ENCODE measurements at regions of chr17 and their contacts with region 1.

Region 1: GRCh38 chr17:14300575-14301278 is at the start of gene HS3ST3B1:
- DNase-seq: peak; percentile 100
- ATAC-seq: peak; percentile 84
- H3K4me3 ChIP-seq: peak within 1 kb of the TSS; percentile 95
- H3K27ac ChIP-seq: peak within 1 kb of the TSS; percentile 92
- H3K4me1 ChIP-seq: peaks cover 4% of the 10 kb centered on the region; the same call in 1 of the 2 replicates
- H3K27me3 ChIP-seq: peaks cover 3% of the 10 kb centered on the region; the same call in 1 of the 2 replicates
- CTCF ChIP-seq: no peak
- POLR2A ChIP-seq: peak; percentile 92
- RAD21 ChIP-seq: peak; percentile 41
- total RNA-seq, gene HS3ST3B1: 4.3 and 5.8 TPM in 2 replicates

Region 2: DNA sequence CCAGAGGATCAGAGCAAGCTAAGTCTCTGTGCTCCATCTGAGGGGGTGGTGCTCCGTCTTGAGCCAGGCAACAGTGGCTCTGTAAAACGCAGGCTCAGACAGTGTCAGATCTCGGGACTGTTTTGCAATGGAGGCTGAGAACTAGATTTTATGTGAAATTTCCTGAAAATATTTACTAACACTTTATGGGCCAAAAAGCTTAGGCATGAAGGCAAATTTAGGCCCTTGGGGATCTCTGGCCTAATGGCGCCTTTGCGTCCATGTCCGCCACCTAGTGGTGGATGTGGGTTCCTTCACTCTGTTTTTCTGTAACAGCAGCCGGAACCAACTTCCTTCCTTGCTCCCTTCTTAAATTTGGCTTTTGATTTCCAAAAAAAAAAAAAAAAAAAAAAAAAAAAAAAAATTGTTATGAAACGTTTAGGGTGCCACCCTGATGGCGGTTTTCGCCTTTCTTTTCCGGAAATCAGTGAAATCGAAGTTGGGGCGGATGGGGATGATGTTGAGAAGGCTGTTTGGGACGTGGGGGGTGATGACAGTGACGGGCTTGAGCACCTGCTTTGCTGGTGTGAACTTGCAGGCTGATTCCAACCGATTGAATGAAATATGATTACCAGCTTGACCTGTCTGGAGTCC is 1268.9 kb before region 1 on chr17:
- CTCF ChIA-PET with region 1: no interaction called
- POLR2A ChIA-PET with region 1: no interaction called
- dilution Hi-C with region 1: no loop called
- in situ Hi-C with region 1: no loop called
- intact Hi-C with region 1: loop called (anchors 2 kb)
- DNase-seq: peak; percentile 47
- ATAC-seq: peak; percentile 75
- H3K4me3 ChIP-seq: no peak overlapping the region
- H3K27ac ChIP-seq: no peak overlapping the region
- H3K4me1 ChIP-seq: no peaks in the 10 kb centered on the region
- H3K27me3 ChIP-seq: peaks cover 10% of the 10 kb centered on the region
- CTCF ChIP-seq: peak; percentile 68
- POLR2A ChIP-seq: no peak
- RAD21 ChIP-seq: peak; percentile 20; the same call in 1 of the 2 replicates

Region 3: DNA sequence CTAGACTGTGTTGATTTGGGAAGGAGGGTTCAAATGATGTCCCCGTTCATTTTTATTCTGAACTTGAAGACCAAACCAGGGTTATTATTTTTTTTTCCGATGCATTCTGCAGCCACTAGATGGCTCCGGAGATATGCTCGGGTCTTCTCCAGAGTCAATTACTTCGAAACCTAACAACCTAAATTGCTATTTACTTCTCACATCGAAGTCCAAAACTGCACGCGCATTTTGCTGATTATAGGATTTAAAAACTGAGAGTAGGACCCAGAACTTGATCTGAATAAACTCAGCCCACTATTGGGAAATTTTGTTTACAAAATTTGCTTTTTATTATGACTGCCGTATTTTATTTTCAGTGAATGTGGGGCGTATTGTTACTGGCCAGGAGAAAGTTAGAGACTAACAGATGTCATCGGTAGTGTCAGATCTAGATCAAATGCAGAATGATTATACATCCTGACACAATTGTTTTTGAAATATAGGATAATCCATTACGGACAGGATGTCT is 962.8 kb before region 1 on chr17:
- CTCF ChIA-PET with region 1: no interaction called
- POLR2A ChIA-PET with region 1: no interaction called
- dilution Hi-C with region 1: no loop called
- in situ Hi-C with region 1: loop called (anchors 5 kb)
- intact Hi-C with region 1: loop called (anchors 1 kb)
- DNase-seq: peak; percentile 78
- ATAC-seq: peak; percentile 84
- H3K4me3 ChIP-seq: peak overlapping the region; percentile 54
- H3K27ac ChIP-seq: no peak overlapping the region
- H3K4me1 ChIP-seq: peaks cover 5% of the 10 kb centered on the region
- H3K27me3 ChIP-seq: no peaks in the 10 kb centered on the region
- CTCF ChIP-seq: peak; percentile 92
- POLR2A ChIP-seq: peak; percentile 45; the same call in 1 of the 2 replicates
- RAD21 ChIP-seq: peak; percentile 93

Region 4: GRCh38 chr17:13647543-13648021 is 653.1 kb before region 1 on chr17:
- CTCF ChIA-PET with region 1: no interaction called
- POLR2A ChIA-PET with region 1: no interaction called
- dilution Hi-C with region 1: no loop called
- in situ Hi-C with region 1: no loop called
- intact Hi-C with region 1: loop called (anchors 1 kb)
- DNase-seq: no peak
- ATAC-seq: peak; percentile 53
- H3K4me3 ChIP-seq: no peak overlapping the region
- H3K27ac ChIP-seq: no peak overlapping the region
- H3K4me1 ChIP-seq: peaks cover 14% of the 10 kb centered on the region
- H3K27me3 ChIP-seq: no peaks in the 10 kb centered on the region
- CTCF ChIP-seq: no peak
- POLR2A ChIP-seq: no peak
- RAD21 ChIP-seq: no peak

Region 5: GRCh38 chr17:14048169-14048568 is 252.6 kb before region 1 on chr17:
- CTCF ChIA-PET with region 1: no interaction called
- POLR2A ChIA-PET with region 1: no interaction called
- dilution Hi-C with region 1: no loop called
- in situ Hi-C with region 1: no loop called
- intact Hi-C with region 1: loop called (anchors 5 kb)
- DNase-seq: no peak
- ATAC-seq: peak; percentile 14; the same call in 1 of the 2 replicates
- H3K4me3 ChIP-seq: no peak overlapping the region
- H3K27ac ChIP-seq: peak overlapping the region; percentile 41; the same call in 1 of the 2 replicates
- H3K4me1 ChIP-seq: 0 out of 2 replicates have a peak, but pooled peaks cover 3% of the 10 kb centered on the region
- H3K27me3 ChIP-seq: no peaks in the 10 kb centered on the region
- CTCF ChIP-seq: peak; percentile 27; the same call in 1 of the 2 replicates
- POLR2A ChIP-seq: no peak
- RAD21 ChIP-seq: peak; percentile 29

Region 6: DNA sequence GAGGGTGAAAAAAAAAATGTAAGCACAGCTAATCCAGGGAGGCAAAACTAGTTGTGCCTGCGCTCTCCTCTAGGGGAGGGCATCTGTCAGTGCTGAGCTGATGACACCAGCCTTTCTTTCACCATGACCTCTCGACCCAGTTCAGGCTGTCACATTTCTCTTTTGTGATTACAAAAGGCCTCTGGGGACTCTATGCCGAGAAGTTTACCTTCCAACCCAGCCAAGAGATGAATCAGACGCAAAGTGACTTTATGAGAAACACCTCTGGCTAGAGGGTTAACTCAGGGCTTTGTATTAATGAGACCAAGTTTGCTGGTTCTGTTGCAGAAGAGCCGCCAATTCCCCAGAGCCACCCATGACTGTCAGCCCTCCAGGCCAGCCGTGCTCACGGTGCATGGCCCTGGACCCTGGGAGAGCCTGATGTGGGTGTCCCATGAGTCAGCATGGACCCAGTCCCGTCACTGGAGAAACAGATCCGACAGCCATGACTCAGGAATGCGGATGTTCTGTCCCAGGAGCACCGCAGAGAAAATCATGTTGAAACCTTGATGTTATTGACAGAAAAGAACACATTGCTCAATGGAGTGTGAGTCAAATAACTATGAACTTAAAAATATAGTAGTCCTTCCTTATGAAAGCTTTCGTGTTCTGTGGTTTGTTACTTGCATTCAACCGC is 437.4 kb after region 1 on chr17:
- CTCF ChIA-PET with region 1: no interaction called
- POLR2A ChIA-PET with region 1: no interaction called
- dilution Hi-C with region 1: no loop called
- in situ Hi-C with region 1: no loop called
- intact Hi-C with region 1: loop called (anchors 2 kb)
- DNase-seq: peak; percentile 99
- ATAC-seq: peak; percentile 98
- H3K4me3 ChIP-seq: no peak overlapping the region
- H3K27ac ChIP-seq: peak overlapping the region; percentile 16
- H3K4me1 ChIP-seq: peaks cover 6% of the 10 kb centered on the region
- H3K27me3 ChIP-seq: no peaks in the 10 kb centered on the region
- CTCF ChIP-seq: 0 out of 2 replicates have a peak, but pooled peaks have one; percentile 18
- POLR2A ChIP-seq: no peak
- RAD21 ChIP-seq: no peak

Region 7: GRCh38 chr17:15171167-15172047 is 870.7 kb after region 1 on chr17:
- CTCF ChIA-PET with region 1: no interaction called
- POLR2A ChIA-PET with region 1: no interaction called
- dilution Hi-C with region 1: no loop called
- in situ Hi-C with region 1: no loop called
- intact Hi-C with region 1: loop called (anchors 5 kb)
- DNase-seq: peak; percentile 75
- ATAC-seq: peak; percentile 100
- H3K4me3 ChIP-seq: no peak overlapping the region
- H3K27ac ChIP-seq: no peak overlapping the region
- H3K4me1 ChIP-seq: no peaks in the 10 kb centered on the region
- H3K27me3 ChIP-seq: peaks cover 7% of the 10 kb centered on the region
- CTCF ChIP-seq: peak; percentile 80
- POLR2A ChIP-seq: no peak
- RAD21 ChIP-seq: peak; percentile 85